Activated CD4-positive, alpha-beta T cell treated with anti-CD3 and anti-CD28 coated beads, Interleukin-2, amount 10 ng/mL, durations not matched to agents 24 days and 14 days (primary cell): ENCODE measurements at regions of chr6 and their contacts with region 1.

Region 1: GRCh38 chr6:44221291-44221960 is 2.0 kb upstream of the SLC29A1 start:
- DNase-seq: peak; percentile 93
- H3K4me3 Mint-ChIP-seq: no peak overlapping the region
- H3K27ac Mint-ChIP-seq: peak overlapping the region; percentile 42
- H3K4me1 Mint-ChIP-seq: peaks cover 40% of the 10 kb centered on the region
- H3K27me3 Mint-ChIP-seq: peaks cover 18% of the 10 kb centered on the region

Region 2: GRCh38 chr6:44151348-44152108 is 69.9 kb before region 1 on chr6:
- intact Hi-C with region 1: no loop called
- DNase-seq: peak; percentile 95
- H3K4me3 Mint-ChIP-seq: peak overlapping the region; percentile 17
- H3K27ac Mint-ChIP-seq: no peak overlapping the region
- H3K4me1 Mint-ChIP-seq: peaks cover 11% of the 10 kb centered on the region
- H3K27me3 Mint-ChIP-seq: no peaks in the 10 kb centered on the region

Region 3: GRCh38 chr6:44172731-44173500 is 48.5 kb before region 1 on chr6:
- intact Hi-C with region 1: loop called (anchors 5 kb)
- DNase-seq: peak; percentile 93
- H3K4me3 Mint-ChIP-seq: no peak overlapping the region
- H3K27ac Mint-ChIP-seq: peak overlapping the region; percentile 29
- H3K4me1 Mint-ChIP-seq: peaks cover 16% of the 10 kb centered on the region
- H3K27me3 Mint-ChIP-seq: peaks cover 14% of the 10 kb centered on the region

Region 4: DNA sequence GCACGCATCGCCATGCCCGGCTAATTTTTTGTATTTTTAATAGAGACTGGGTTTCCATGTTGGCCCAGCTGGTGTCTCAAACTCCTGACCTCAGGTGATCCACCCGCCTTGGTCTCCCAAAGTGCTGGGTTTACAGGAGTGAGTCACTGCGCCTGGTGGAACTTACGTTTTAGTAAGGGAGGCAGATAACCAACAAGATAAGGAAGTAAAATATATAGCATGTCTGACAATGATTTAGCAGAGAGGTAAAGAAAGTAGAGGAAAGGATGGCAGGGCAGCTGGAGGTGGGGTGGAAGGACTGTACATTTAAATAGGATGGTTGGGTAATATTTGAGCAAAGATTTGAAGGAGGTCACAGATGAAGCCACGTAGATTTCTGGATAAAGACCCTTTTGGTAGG is 17.4 kb before region 1 on chr6:
- intact Hi-C with region 1: no loop called
- DNase-seq: no peak
- H3K4me3 Mint-ChIP-seq: no peak overlapping the region
- H3K27ac Mint-ChIP-seq: no peak overlapping the region
- H3K4me1 Mint-ChIP-seq: no peaks in the 10 kb centered on the region
- H3K27me3 Mint-ChIP-seq: peaks cover 16% of the 10 kb centered on the region

Region 5: GRCh38 chr6:44237813-44238433 is 16.5 kb after region 1 on chr6:
- intact Hi-C with region 1: loop called (anchors 1 kb)
- DNase-seq: peak; percentile 96
- H3K4me3 Mint-ChIP-seq: peak overlapping the region; percentile 89
- H3K27ac Mint-ChIP-seq: peak overlapping the region; percentile 98
- H3K4me1 Mint-ChIP-seq: peaks cover 33% of the 10 kb centered on the region
- H3K27me3 Mint-ChIP-seq: peaks cover 2% of the 10 kb centered on the region

Region 6: GRCh38 chr6:44246663-44247337 is 25.4 kb after region 1 on chr6 and contains the start of gene HSP90AB1:
- intact Hi-C with region 1: loop called (anchors 1 kb)
- DNase-seq: peak; percentile 99
- H3K4me3 Mint-ChIP-seq: peak within 1 kb of the TSS; percentile 92
- H3K27ac Mint-ChIP-seq: peak within 1 kb of the TSS; percentile 98
- H3K4me1 Mint-ChIP-seq: peaks cover 40% of the 10 kb centered on the region
- H3K27me3 Mint-ChIP-seq: peaks cover 3% of the 10 kb centered on the region
- total RNA-seq, gene HSP90AB1: 2,450 and 2,479 TPM in 2 replicates

Region 7: DNA sequence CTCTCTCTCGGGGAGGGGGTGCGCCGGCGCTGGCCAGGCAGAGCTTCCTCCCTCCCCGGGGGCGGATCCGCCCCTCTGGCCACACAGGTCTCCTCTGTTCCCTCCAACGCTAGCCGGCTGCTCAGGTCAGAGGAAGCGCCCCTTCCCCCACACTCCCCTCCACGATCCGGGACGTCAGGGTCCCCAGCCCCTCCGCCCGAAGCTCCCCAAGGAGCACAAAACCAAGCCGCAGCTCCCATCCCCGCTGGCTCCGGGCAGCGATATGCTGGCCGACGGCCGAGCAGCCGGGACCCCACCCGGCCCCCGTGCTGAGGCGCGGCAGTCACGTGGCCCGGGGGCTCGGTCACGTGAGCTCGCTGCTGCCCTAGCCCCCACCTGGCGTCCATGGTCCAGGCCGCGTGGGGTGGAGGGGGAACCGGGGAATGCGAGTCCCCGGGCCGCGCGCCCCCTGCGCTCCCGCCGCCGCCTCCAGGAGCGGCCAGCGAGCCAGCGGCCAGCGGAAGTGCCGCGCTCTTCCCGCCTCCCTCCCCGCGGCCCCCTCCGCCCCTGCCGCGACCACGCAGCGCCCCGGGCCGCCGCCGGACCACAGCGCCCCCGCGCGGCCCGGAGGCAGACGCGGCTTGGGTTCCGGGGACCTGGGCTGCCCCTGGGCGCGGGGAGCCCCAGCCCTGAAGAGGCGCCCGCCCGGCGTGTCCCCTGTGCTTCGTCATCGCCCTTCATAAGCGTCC is 35.8 kb after region 1 on chr6 and contains the start of gene SLC35B2:
- intact Hi-C with region 1: loop called (anchors 2 kb)
- DNase-seq: peak; percentile 93
- H3K4me3 Mint-ChIP-seq: peak within 1 kb of the TSS; percentile 94
- H3K27ac Mint-ChIP-seq: peak within 1 kb of the TSS; percentile 94
- H3K4me1 Mint-ChIP-seq: peaks cover 57% of the 10 kb centered on the region
- H3K27me3 Mint-ChIP-seq: no peaks in the 10 kb centered on the region
- total RNA-seq, gene SLC35B2: 25.3 and 28.0 TPM in 2 replicates

Region 8: DNA sequence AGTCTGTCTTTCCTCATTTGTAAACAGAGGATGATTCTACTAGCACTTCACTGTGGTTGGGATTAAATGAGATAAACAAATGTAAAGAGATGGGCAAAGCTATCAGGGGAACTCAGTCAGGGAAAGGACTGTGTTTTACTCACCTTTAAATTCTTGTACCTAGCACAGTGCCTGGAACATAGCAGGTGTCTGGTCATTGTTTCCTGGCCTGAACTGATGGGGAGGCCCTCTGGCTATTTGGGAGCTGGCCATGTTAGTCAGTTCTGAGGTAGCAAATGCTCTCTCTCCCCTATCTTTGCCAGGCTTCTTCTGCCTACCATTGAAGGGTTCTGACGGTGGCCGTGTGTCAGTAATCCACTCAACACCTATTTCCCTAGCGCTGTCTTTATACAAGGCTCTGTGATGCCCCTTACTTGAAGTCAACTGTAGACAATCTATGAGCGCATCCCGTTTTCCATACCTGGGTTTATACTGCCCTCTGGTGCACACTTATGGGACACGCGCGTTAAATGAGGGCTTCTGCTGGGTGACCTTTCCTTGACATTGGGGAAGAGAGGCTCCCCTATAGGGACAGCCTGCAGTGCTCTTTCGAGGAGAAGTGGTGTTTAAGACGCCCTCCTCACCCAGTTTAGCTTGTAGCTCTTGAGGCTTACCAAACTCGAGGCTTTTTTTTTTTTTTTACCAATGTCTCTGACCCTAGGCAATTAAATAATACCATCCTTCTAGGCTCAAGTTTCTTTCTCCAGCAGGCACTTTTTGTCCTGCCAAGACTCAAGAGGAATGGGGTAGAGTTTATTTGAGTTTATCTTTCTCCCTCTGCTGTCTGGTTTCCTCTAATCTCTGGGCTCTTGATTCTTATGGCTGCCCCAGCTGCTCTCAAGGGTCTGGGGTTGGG is 117.0 kb after region 1 on chr6:
- intact Hi-C with region 1: loop called (anchors 5 kb)
- DNase-seq: peak; percentile 91
- H3K4me3 Mint-ChIP-seq: no peak overlapping the region
- H3K27ac Mint-ChIP-seq: no peak overlapping the region
- H3K4me1 Mint-ChIP-seq: no peaks in the 10 kb centered on the region
- H3K27me3 Mint-ChIP-seq: peaks cover 30% of the 10 kb centered on the region